PC-3 (cell line): ENCODE measurements at regions of chr7 and their contacts with region 1.

Region 1: DNA sequence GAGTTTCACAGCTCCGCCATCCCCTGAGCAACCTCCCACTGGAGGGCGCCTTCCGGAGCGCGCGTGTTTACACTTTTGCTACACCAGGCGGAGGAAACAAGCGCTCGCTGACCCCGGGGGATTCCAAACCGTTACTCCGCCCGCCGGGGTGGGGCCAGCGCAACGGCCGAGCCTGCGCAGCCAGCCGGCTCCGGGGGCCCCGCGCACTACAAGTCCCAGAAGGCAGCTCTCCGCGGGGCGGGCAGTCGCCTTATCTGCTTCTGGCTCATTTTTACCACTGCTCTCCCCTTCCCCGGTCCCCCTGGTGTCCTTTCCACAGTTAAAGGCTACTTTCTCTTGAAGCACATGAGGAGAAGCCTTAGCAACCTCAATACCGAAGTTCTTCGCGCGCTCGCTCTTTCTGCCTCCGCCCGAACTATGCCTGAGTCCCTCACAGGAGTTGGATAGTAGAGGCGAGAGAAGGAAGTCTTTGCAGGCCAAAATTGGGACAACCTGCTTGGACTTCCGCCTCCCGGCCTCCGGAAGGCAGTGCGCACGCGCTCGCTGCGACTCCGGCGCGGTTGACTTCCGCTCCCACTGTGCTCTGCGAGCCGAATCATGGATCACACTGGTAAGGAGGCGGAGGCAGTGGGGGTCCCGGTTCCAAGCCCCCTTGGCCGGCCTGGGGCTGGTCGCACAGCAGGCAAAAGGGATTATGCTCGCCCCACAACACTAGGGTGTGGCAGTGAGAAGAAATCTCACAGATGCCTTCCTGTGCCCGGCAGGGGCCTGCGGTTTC is at the start of gene CBLL1:
- DNase-seq: peak; percentile 91
- ATAC-seq: peak; percentile 93
- H3K4me3 ChIP-seq: peak within 1 kb of the TSS; percentile 98
- H3K27ac ChIP-seq: peak within 1 kb of the TSS; percentile 94
- H3K4me1 ChIP-seq: peaks cover 26% of the 10 kb centered on the region
- H3K27me3 ChIP-seq: no peaks in the 10 kb centered on the region
- CTCF ChIP-seq: peak; percentile 76
- total RNA-seq, gene CBLL1: 10.6 and 10.7 TPM in 2 replicates

Region 2: DNA sequence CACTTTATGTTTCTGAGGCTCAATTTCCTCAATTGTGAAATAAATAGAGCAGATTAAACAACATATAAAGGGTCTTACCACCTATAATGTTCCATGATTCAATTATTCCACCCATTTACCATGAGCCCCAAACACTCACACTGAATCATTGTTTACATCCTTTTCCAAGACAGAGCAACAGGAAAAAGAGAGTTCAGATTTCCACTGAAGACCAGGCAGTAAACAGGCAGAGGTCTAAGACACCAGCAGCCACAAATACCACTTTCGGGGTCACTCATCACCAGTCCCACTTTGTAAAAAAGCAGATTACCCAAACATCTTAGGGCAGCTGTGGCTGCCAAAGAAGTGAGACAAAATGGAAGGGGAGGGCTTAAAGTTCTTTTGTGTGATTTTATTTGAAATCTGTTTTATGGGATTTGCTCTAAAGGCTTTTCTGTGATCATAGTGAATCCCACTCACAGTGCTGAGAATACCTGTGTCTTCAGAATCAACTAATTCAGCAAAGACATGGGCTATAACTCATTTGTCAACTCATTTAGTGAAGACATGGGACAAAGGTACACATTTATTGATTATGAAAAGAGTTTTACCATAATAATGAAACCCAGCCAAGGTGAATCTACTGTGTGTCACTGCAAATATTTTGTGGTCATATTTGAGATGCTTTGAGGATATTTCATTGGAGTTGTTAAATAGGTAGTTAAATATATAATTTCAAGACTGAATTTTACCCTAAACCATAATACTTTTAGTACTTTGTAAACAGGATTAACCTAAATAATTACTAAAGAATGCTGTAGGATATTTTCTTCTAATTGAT is 122.4 kb after region 1 on chr7:
- CTCF ChIA-PET with region 1: interaction called, 5 read pairs
- POLR2A ChIA-PET with region 1: interaction called, 3 read pairs
- intact Hi-C with region 1: loop called (anchors 2 kb)
- DNase-seq: peak; percentile 81
- ATAC-seq: peak; percentile 92
- H3K4me3 ChIP-seq: peak overlapping the region; percentile 55
- H3K27ac ChIP-seq: peak overlapping the region; percentile 93
- H3K4me1 ChIP-seq: peaks cover 19% of the 10 kb centered on the region
- H3K27me3 ChIP-seq: no peaks in the 10 kb centered on the region
- CTCF ChIP-seq: no peak

Region 3: DNA sequence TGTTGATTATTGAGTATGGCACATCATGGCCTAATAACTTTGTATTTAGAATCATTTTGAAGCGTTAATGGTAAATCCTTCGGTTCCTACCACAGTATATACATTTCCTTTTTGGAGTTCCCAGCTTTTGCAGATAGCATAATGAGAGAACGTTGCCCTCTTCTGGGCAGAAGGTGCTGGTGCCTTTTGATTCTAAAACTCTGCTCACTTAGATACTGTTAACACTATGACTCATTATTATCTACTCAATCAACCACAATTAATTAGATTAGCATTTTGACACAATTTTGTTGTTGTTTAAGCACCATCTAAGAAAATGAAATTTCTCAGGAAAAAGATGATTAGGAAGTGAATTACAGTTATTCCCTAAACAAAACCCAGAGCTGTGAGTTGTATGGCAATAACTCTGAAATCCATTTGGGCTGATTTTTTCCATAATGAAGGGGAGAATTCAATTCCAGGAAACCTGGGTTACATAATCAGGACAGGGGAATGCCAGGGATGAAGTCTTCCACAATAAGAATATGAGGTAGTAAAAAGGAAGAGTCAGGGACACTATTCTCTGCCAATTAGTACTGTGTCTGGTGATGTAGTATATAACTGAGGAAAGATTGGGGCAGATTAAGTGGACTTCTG is 135.8 kb after region 1 on chr7:
- CTCF ChIA-PET with region 1: interaction called, 77 read pairs
- POLR2A ChIA-PET with region 1: interaction called, 6 read pairs
- intact Hi-C with region 1: loop called (anchors 1 kb)
- DNase-seq: peak; percentile 70
- ATAC-seq: peak; percentile 78
- H3K4me3 ChIP-seq: peak overlapping the region; percentile 38; the same call in 1 of the 2 replicates
- H3K27ac ChIP-seq: no peak overlapping the region
- H3K4me1 ChIP-seq: peaks cover 5% of the 10 kb centered on the region; the same call in 1 of the 2 replicates
- H3K27me3 ChIP-seq: no peaks in the 10 kb centered on the region
- CTCF ChIP-seq: peak; percentile 79

Region 4: DNA sequence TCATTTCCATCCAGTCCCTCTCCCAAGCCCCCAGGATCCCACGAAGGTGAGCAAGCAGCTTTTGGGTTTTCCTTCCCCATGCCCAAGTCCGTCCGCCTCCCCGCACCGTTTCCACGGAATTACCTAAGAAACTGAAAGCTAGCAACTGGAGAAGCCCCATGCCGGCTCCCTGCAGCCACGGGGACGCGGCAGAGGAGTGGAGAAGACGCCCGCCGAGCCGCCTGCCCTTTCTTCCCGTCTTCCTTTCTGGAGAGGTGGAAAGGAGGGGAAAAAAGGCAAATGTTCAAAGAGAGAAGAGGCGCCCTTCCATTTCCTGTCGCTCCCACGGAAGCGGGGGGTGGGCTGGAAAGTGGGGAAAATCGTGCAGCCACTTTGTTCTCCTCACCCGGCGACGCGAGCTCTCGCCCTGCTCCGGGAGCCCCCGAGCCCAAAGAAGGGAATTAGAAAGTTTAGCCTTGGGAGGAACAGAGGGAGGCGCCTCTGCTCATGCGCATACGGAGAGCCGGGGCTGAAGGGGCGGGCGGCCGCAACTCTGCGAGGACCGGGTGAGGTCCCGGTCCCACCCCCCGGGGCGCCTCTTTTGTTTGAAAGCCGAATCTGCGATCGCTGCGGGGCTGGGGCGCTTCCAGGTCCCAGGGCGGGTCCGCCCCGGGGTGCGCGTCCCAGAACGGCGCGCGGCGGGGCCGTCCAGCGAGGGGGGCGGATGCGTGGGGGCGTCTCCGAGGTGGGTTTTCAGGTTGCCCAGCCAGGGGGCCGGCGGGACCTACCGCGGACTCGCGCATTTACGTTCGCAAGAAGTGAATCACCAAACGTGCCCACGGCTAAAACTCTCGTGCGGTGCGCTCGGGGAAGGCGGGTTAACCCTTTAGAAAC is 259.2 kb after region 1 on chr7 and contains the start of gene LAMB1:
- CTCF ChIA-PET with region 1: no interaction called
- POLR2A ChIA-PET with region 1: no interaction called
- intact Hi-C with region 1: loop called (anchors 10 kb)
- DNase-seq: peak; percentile 69
- ATAC-seq: peak; percentile 64
- H3K4me3 ChIP-seq: peak within 1 kb of the TSS; percentile 87
- H3K27ac ChIP-seq: peak within 1 kb of the TSS; percentile 71
- H3K4me1 ChIP-seq: peaks cover 53% of the 10 kb centered on the region
- H3K27me3 ChIP-seq: no peaks in the 10 kb centered on the region
- CTCF ChIP-seq: no peak
- total RNA-seq, gene LAMB1: 74.3 and 101 TPM in 2 replicates